H1 (cell line): ENCODE measurements at regions of chr2 and their contacts with region 1.

Region 1: DNA sequence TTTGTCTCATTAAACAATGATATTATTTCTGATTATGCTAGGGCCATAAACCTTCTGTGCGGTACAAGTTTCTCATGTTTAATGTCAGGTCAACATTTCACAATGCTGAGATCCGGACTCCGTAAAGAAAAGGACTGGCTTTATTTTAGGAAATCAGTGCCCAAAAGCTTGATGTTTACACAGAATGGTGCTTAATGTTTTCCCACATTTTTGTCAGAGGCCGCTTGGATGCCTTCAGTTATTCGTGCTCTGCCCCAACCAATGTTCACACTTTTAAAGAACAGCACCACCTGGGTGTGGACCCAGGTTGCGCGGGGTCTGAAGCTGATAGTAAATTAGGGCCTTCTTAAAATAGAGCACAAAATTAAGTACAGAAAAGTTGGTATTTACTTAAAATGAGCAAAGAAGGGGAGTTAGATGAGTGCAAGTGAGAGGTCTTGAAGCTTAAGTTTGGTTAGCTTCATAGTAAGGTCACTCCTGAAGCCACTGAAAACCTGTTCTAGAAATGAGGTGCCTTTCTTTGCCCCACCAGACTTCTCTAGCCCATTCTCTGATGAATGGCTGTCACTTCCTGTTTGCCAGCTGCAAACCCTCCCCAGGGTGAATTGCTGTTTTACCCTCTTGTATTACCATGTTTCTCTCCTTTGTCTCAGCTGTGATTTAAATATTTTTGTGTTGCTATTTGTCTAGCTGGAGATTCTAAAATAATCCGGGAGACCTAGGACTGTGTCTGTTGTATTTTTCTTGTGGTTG is 20.5 kb downstream of the SLC3A1 start:
- DNase-seq: no peak
- H3K4me3 ChIP-seq: no peak overlapping the region
- H3K27ac ChIP-seq: no peak overlapping the region
- H3K4me1 ChIP-seq: no peaks in the 10 kb centered on the region
- H3K27me3 ChIP-seq: no peaks in the 10 kb centered on the region
- CTCF ChIP-seq: peak; percentile 51 to 59 (median 56)
- EP300 ChIP-seq: no peak
- POLR2A ChIP-seq: no peak
- RAD21 ChIP-seq: peak; percentile 58 to 63

Region 2: DNA sequence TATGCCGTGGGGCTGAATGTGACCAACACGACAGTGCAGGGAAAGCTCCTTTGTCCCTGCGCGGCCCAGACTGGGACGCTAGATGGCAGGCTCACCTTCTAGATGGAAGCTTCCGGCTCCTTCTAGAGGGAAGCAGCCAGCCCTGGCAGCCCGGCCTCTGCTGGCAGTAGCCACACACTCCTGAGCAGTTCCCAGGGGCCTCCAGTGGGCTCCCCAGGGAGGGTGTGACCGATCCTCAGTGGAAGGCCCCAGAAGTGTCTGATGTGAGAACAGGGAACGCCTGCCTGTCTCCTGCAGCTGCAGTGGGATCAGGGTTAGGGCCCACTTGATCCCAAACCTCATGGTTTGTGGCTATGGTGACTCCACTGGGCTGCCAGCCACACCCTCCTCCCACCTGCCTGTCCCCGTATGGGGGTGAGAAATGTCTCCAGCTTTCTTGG is 251.5 kb before region 1 on chr2:
- CTCF ChIA-PET with region 1: interaction called, 15 read pairs
- POLR2A ChIA-PET with region 1: no interaction called
- DNase-seq: peak; percentile 73 to 91
- H3K4me3 ChIP-seq: no peak overlapping the region
- H3K27ac ChIP-seq: no peak overlapping the region
- H3K4me1 ChIP-seq: no peaks in the 10 kb centered on the region
- H3K27me3 ChIP-seq: no peaks in the 10 kb centered on the region
- CTCF ChIP-seq: peak; percentile 95 to 99 (median 98)
- EP300 ChIP-seq: no peak; a peak in 1 of 3 replicates
- POLR2A ChIP-seq: no peak
- RAD21 ChIP-seq: peak; percentile 99

Region 3: GRCh38 chr2:44250376-44250775 is 45.4 kb before region 1 on chr2:
- CTCF ChIA-PET with region 1: interaction called, 16 read pairs
- POLR2A ChIA-PET with region 1: no interaction called
- DNase-seq: no peak
- H3K4me3 ChIP-seq: no peak overlapping the region
- H3K27ac ChIP-seq: no peak overlapping the region
- H3K4me1 ChIP-seq: peaks cover 0 to 4% (median 2%) of the 10 kb centered on the region in 4 experiments; a peak in 5 of 7 replicates
- H3K27me3 ChIP-seq: no peaks in the 10 kb centered on the region
- CTCF ChIP-seq: no peak
- EP300 ChIP-seq: no peak
- POLR2A ChIP-seq: no peak
- RAD21 ChIP-seq: no peak